ENCODE measurements at regions of chr1 and their contacts with region 1.

Region 1: DNA sequence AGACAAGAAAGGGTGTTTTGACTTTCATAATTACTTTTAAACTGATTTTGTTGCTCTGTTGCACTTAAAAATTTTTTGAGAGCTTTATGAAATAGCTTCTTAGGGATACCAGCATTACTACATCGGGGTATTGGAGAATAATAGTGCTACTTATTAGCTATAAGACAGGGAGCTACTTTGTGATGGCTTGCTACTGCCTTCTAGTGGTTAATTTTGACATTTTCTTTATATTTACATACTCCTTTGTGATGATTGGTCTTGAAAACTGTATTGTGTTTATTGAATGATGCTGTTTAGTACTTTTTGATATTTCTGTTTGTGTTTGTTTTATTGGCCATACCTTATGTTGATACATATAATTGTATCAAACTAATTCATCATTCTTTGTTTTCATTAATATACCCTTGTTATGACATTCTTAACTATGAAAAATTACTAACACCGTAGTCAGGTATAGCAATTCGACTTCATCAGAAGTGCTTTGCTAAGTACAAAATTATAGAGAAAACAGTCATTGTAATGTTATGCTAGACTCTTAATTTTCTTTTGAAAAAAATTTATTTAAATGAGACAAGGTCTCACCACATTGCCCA is 85.5 kb downstream of the CLIC4 start:
- DNase-seq: peak in 4 of 5 donors; percentile 48 to 54 (median 52)
- H3K4me3 ChIP-seq: no peak overlapping the region
- H3K4me3 Mint-ChIP-seq: no peak overlapping the region
- H3K27ac ChIP-seq: no peak overlapping the region
- H3K27ac Mint-ChIP-seq: no peak overlapping the region
- H3K4me1 ChIP-seq: no peaks in the 10 kb centered on the region
- H3K4me1 Mint-ChIP-seq: no peaks in the 10 kb centered on the region
- H3K27me3 ChIP-seq: no peaks in the 10 kb centered on the region
- H3K27me3 Mint-ChIP-seq: peaks cover 5 to 7% of the 10 kb centered on the region in 2 donors

Region 2: GRCh38 chr1:24695202-24695974 is 135.4 kb before region 1 on chr1:
- CTCF ChIA-PET with region 1: interaction called, 308 read pairs
- POLR2A ChIA-PET with region 1: no interaction called
- intact Hi-C with region 1: no loop called
- DNase-seq: peak in 1 of 5 donors; percentile 30
- H3K4me3 ChIP-seq: no peak overlapping the region
- H3K4me3 Mint-ChIP-seq: peak overlapping the region in 2 of 8 donors; percentile 17 to 57
- H3K27ac ChIP-seq: no peak overlapping the region
- H3K27ac Mint-ChIP-seq: peak overlapping the region in 3 of 7 donors; percentile 24 to 89 (median 36)
- H3K4me1 ChIP-seq: no peaks in the 10 kb centered on the region
- H3K4me1 Mint-ChIP-seq: peaks cover 0 to 6% (median 2%) of the 10 kb centered on the region in 4 donors
- H3K27me3 ChIP-seq: no peaks in the 10 kb centered on the region
- H3K27me3 Mint-ChIP-seq: no peaks in the 10 kb centered on the region

Region 3: GRCh38 chr1:24744911-24745710 is 85.7 kb before region 1 on chr1 and contains the start of gene CLIC4:
- CTCF ChIA-PET with region 1: interaction called, 5 read pairs
- POLR2A ChIA-PET with region 1: no interaction called
- intact Hi-C with region 1: loop called (anchors 2 kb)
- DNase-seq: peak; percentile 98 to 99 (median 99)
- H3K4me3 ChIP-seq: peak within 1 kb of the TSS in 1 of 2 donors; percentile 58
- H3K4me3 Mint-ChIP-seq: peak within 1 kb of the TSS; percentile 83 to 93 (median 87)
- H3K27ac ChIP-seq: peak within 1 kb of the TSS; percentile 55
- H3K27ac Mint-ChIP-seq: peak within 1 kb of the TSS; percentile 58 to 90 (median 86)
- H3K4me1 ChIP-seq: peaks cover 26% of the 10 kb centered on the region
- H3K4me1 Mint-ChIP-seq: peaks cover 2 to 21% (median 11%) of the 10 kb centered on the region in 4 donors
- H3K27me3 ChIP-seq: no peaks in the 10 kb centered on the region
- H3K27me3 Mint-ChIP-seq: peaks cover 6 to 9% of the 10 kb centered on the region in 2 donors
- total RNA-seq, gene CLIC4: 3.0 to 3.8 TPM